ENCODE measurements at regions of chr12 and their contacts with region 1.

Region 1: DNA sequence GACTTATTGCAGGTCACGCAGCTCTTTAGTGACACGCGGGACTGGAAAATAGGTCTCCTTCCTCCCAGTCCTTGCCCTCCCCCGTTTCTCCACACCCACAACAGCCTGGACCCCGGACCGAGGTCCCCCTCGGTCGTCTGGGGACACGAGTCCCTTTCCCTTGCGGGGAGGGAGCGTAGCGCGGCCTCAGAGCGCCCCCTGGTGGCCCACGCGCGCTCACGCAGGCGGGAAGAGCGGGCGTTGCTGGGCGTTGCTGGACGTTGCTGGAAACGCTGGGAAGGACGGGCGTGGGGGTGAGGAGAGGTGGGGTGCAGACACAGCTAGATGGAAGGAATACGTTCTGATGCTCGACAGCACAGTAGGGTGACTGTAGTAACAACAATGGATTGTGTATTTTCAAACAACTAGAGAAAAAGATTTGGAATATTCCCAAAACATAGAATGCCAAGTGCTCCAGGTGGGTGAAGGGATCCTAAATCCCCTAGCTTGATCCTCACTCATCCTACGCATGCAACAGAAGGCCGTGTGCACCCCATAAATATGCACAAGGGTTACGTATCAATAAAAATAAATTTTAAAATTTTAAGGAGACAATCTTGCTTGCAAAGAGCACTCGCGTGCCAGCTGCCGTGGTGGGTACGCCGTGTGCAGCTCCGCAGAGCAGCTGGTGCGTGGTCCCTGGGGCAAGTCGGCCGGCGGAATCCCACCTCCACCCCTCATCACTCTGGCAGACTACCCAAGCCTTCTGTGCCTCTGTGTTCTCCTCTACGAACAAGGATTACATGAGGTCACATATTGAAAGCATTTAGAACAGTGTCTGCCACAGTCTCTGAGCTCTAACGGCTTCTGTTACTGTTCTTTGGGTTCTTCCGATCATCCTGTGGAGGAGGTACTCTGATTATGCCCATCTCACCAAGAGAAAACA is 87.4 kb downstream of the B4GALNT3 start:
- DNase-seq: peak; percentile 84
- ATAC-seq: peak; percentile 86

Region 2: DNA sequence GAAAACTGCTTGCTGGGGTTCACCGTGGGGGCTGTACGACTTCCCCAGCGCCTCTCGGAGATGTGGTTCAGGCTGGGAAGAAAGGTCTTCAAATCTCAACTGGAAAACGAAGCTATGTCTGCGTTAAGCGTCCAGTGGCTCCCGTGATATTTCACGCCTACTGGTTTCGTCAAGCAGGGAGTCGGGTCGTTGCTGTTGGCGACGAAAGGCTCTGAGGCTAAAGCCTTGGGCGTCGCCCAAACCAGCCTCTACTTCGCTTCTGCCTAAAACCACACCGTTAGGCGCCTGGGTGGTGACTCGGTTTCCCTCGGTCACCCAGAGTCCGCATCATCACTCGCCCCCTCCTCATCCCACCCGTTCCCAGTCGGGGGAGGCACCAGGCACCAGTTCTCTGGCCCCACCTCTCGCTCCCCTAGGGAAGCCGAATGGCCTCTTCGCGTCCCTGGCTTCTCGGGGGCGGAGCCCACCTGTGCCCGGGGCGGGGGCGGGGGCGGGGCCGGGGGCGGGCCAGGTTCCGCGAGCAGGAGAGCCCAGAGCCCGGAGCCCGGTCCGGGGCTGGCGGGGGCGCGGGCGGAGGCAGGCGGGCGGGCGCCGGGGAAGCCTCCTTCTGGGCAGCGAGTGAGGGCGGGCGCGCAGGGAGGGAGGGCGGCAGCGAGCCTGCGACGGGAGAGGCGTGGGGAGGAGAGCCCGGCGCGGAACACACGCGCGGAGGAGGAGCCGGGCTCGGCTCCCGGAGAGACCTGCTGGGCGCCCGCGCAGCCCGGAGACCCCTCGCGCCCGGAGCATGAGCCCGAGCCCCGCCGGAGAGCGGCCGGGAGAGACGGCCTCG is 87.5 kb before region 1 on chr12 and contains the start of gene B4GALNT3:
- intact Hi-C with region 1: loop called (anchors 5 kb)
- DNase-seq: peak; percentile 66
- ATAC-seq: peak; percentile 59
- total RNA-seq, gene B4GALNT3: 28.8 TPM